AG04449 (cell line): ENCODE measurements at regions of chr22 and their contacts with region 1.

Region 1: DNA sequence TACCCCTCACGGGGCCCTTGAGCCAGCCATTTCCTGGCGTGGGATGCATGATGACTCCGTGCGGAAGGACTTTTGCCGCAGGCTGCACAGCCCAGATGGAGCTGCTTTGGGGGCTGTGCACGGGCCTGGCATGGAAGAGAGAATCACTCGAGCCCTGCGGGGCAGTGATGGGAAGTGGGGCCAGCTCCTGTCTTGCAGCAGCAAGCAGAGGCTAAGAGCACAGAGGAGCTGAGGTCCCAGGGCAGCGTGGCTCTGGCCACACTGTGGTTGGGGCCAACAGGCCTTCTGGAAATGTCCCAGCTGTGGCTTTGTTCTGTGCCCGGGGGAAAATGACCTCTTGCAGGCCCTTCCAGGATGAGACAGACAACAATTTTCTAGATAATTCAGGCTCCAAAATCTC is 92.7 kb upstream of the TIMP3 start:
- DNase-seq: no peak
- H3K4me3 ChIP-seq: no peak overlapping the region
- CTCF ChIP-seq: no peak

Region 2: GRCh38 chr22:32695451-32695891 is 13.4 kb before region 1 on chr22:
- CTCF ChIA-PET with region 1: no interaction called
- POLR2A ChIA-PET with region 1: no interaction called
- DNase-seq: peak; percentile 61
- H3K4me3 ChIP-seq: no peak overlapping the region
- CTCF ChIP-seq: no peak

Region 3: GRCh38 chr22:32723643-32724042 is 14.8 kb after region 1 on chr22:
- CTCF ChIA-PET with region 1: interaction called, 4 read pairs
- POLR2A ChIA-PET with region 1: interaction called, 15 read pairs
- DNase-seq: peak; percentile 87
- H3K4me3 ChIP-seq: no peak overlapping the region
- CTCF ChIP-seq: no peak

Region 4: DNA sequence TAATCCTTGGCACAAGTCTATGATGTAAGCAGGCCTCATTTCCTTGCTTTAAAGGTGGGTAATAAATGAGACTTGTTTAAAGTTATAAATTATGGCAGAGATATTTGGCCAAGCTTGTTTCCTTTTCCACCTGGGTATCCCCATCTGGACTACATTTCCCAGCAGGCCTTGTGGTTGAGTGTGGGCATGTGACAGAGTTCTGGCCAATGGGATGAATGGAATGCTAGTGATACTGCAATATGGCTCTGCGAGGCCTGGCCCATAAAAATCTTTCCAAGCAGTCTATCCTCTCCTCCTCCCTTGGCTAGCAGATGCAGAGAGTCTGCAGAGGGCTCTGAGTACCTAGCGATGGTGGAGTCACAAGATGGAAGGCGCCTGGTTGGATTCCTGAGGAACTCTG is 195.2 kb after region 1 on chr22:
- CTCF ChIA-PET with region 1: no interaction called
- POLR2A ChIA-PET with region 1: no interaction called
- DNase-seq: no peak
- H3K4me3 ChIP-seq: no peak overlapping the region
- CTCF ChIP-seq: no peak